Posterior vena cava (tissue), 2 donors: ENCODE measurements at regions of chr2 and their contacts with region 1.

Region 1: GRCh38 chr2:158753641-158754611 is 41.2 kb upstream of the DAPL1 start:
- DNase-seq: no peak

Region 2: GRCh38 chr2:158723917-158724690 is 29.8 kb before region 1 on chr2:
- intact Hi-C with region 1: loop called in 1 of 2 experiments (anchors 1 kb)
- DNase-seq: no peak

Region 3: DNA sequence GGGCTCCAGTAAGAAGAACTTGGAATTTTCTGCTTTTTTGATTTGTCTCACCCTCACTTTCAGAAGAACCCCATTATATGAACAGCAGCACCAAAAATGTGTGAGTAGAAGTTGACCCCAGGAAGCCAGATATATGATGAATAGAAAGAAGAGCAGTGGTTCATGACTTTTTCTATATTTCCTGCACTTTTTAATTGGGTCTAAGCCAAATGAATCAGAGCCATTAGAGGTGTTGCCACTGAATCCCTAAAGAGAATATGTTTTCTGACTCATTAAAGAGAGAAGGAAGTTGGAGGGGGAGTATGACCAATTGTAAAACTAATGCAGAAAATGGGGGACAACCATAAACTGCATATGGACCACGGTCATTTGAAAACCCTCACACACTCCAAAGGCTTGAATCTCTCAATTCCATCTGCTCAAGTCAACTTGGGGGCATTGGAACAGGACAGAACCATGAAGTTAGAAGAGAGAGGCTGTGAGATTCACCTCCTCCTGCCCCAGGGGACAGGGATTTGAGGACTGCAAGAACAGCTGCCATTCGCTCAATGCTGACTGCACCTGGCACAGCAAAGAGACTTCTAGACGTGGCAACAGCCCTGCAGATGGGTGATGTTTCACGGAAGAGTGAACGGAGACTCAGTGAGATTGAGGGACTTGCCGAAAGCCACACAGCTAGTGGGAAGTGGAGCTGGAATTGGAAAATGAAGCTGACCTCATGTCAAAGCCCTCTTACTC is 44.2 kb after region 1 on chr2:
- intact Hi-C with region 1: loop called in 1 of 2 experiments (anchors 2 kb)
- DNase-seq: no peak